ENCODE measurements at regions of chr12 and their contacts with region 1.

Region 1: DNA sequence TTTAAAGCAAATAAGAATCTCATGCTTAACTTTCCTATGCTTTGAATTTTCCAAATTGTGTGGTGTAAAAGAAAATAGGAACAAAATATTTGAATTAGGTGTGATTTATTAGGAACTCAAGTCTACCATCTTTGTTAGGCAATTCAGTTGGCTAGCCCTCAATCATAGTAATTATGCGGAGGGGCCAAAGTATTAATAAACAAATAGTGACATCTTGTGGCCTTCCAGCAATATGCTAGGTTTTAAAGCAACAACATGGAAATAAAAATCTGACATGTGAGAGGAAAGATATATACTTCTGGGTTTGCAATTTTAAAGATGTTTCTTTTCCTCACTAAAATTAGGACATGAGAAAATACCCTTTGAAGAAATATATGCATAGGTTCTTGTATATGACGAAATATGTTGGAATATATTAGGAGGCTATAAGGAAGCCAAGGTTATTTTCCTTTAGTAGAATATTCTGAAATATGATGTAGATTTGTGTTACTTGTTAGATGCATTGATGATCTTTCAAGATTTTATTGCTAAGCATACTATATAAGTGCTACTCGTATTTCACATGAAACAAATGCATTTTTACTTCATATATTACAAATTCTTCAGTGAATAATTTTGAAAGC is 200.4 kb downstream of the PTPRO start:
- DNase-seq: peak; percentile 23
- CTCF ChIP-seq: peak; percentile 56

Region 2: DNA sequence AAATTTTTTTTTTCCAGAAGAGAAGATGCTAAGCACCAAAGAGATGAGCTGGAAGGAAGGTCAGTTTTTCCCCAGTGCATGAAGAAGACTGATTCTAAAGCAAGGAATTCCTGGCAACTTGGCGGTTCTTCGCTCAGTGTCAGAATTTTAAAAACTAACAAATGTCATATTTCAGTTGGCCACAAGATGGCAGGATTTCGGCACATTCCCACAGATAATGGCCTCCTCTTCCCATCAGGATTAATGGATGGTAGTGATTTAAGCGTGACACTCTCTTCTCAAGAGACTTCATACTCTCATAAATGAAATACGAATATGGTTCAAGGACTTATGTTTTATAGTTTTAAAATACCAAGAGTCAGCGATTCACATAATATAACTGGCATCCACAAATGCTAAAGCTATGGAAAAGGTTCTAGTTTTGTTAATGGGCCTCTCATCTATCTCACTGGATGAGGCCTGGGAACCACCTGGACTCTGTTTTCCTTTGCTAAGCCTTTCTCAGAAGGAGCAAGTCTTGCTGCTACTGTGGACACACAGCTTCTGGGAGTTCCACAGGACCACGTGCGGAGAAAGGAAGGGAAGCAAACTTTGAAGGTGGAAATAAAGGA is 246.5 kb before region 1 on chr12:
- CTCF ChIA-PET with region 1: interaction called, 31 read pairs
- POLR2A ChIA-PET with region 1: no interaction called
- DNase-seq: peak; percentile 22
- CTCF ChIP-seq: peak; percentile 54

Region 3: GRCh38 chr12:16118586-16118985 is 595.9 kb after region 1 on chr12:
- CTCF ChIA-PET with region 1: no interaction called
- POLR2A ChIA-PET with region 1: no interaction called
- DNase-seq: no peak
- CTCF ChIP-seq: no peak